Natural killer cell (primary cell): ENCODE measurements at regions of chr3 and their contacts with region 1.

Region 1: DNA sequence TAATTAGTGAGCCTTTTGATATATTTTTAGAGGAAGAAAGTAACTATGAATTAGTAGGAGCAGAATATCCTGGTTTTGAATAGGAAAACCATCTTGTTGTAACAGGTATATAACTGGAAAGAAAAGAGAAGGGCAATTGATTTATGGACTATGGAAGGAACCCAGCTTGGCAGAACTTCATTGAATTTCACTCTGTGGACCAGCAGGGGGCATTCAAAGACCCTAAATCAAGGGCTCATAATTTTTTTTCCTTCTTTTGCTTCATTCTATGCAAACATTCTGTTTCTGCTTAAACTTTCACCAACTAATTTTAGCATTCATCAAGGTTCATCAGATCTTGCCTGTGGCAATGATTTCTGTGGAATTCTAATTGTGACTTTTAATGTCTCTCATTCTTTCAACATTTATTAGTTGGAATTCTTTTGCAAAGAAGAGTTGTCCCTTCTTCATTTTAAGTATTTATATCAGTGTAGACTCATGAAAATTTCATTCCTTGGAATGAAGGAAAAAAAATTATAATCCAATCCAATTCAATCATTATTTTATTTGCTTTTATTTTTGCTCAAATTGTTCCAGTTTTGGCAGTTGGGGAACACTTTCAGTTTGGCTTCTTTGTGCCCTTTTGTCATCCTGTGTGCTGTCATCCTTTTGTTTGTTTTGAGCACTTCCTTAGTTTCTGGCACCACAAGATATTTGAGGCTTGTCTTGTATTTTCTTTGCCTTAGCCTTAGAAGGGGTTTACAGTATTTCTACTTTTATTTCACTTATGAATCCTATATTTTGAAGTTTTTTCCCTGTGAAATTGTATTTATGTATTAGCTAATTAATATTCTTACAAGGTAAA is 30.4 kb downstream of the NXPE3 start:
- DNase-seq: peak in 1 of 2 donors; percentile 81
- ATAC-seq: peak; percentile 62 to 80 (median 74)
- H3K4me3 ChIP-seq: no peak overlapping the region
- H3K4me3 Mint-ChIP-seq: no peak overlapping the region
- H3K27ac ChIP-seq: no peak overlapping the region
- H3K27ac Mint-ChIP-seq: peak overlapping the region; percentile 29 to 45
- H3K4me1 ChIP-seq: no peaks in the 10 kb centered on the region
- H3K4me1 Mint-ChIP-seq: peaks cover 8% of the 10 kb centered on the region in 2 donors
- H3K27me3 ChIP-seq: no peaks in the 10 kb centered on the region
- H3K27me3 Mint-ChIP-seq: no peaks in the 10 kb centered on the region
- CTCF ChIP-seq: peak; percentile 74

Region 2: DNA sequence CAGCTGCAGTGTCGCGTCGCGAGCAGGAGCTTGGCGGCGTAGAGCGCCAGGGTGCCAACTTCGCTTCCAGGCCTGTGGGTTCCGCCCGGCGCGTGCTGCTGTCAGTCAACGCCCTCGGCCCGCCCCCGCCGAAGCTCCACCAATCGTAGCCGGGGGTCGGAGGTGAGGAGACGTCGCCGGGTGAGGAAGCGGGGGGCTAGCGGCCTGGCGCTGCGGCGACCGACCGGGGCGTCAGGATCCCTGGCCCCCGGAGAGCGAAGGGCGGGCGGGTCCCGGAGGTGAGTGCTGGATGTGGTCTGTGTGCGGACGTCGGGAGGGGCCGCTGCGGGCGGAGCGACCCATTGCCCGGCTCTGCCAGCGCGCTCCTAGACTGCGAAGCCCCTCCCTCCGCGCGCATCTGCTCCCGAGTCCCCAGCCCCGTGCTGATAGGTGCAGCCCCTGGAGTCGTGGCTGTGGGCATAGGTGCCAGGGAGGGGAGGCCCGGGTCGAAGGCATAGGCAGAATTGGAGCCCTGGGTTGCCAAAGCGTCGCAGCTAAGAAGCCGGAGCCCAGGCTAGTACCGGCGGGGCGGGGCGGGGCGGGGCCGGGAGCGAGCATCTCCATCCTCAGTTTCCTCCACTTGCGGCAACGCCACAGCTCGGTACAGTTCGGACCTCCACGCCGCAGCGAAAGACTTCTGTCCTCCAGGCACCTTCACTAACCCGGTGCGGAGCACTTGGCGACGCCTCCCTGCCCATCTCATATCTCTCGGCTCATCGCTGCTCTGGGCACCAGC is 30.2 kb before region 1 on chr3 and contains the start of gene NXPE3:
- intact Hi-C with region 1: no loop called
- DNase-seq: peak; percentile 94 to 95
- ATAC-seq: peak; percentile 93 to 97 (median 94)
- H3K4me3 ChIP-seq: peak within 1 kb of the TSS; percentile 82
- H3K4me3 Mint-ChIP-seq: peak within 1 kb of the TSS; percentile 95
- H3K27ac ChIP-seq: peak within 1 kb of the TSS; percentile 95
- H3K27ac Mint-ChIP-seq: peak within 1 kb of the TSS; percentile 91 to 97
- H3K4me1 ChIP-seq: peaks cover 16% of the 10 kb centered on the region
- H3K4me1 Mint-ChIP-seq: peaks cover 24 to 34% of the 10 kb centered on the region in 2 donors
- H3K27me3 ChIP-seq: no peaks in the 10 kb centered on the region
- H3K27me3 Mint-ChIP-seq: no peaks in the 10 kb centered on the region
- CTCF ChIP-seq: no peak
- total RNA-seq, gene NXPE3: 17.0 to 27.1 (median 21.1) TPM

Region 3: GRCh38 chr3:101791778-101792177 is 17.6 kb before region 1 on chr3:
- intact Hi-C with region 1: no loop called
- DNase-seq: no peak
- ATAC-seq: no peak
- H3K4me3 ChIP-seq: no peak overlapping the region
- H3K4me3 Mint-ChIP-seq: no peak overlapping the region
- H3K27ac ChIP-seq: no peak overlapping the region
- H3K27ac Mint-ChIP-seq: no peak overlapping the region
- H3K4me1 ChIP-seq: no peaks in the 10 kb centered on the region
- H3K4me1 Mint-ChIP-seq: peaks cover 34 to 35% of the 10 kb centered on the region in 2 donors
- H3K27me3 ChIP-seq: no peaks in the 10 kb centered on the region
- H3K27me3 Mint-ChIP-seq: no peaks in the 10 kb centered on the region
- CTCF ChIP-seq: no peak

Region 4: GRCh38 chr3:101827211-101828174 is 18.1 kb after region 1 on chr3:
- intact Hi-C with region 1: loop called (anchors 2 kb)
- DNase-seq: peak; percentile 75 to 90
- ATAC-seq: peak; percentile 80 to 92 (median 86)
- H3K4me3 ChIP-seq: peak overlapping the region; percentile 56
- H3K4me3 Mint-ChIP-seq: peak overlapping the region; percentile 92
- H3K27ac ChIP-seq: peak overlapping the region; percentile 89
- H3K27ac Mint-ChIP-seq: peak overlapping the region; percentile 89 to 96
- H3K4me1 ChIP-seq: peaks cover 26% of the 10 kb centered on the region
- H3K4me1 Mint-ChIP-seq: peaks cover 35 to 38% of the 10 kb centered on the region in 2 donors
- H3K27me3 ChIP-seq: no peaks in the 10 kb centered on the region
- H3K27me3 Mint-ChIP-seq: no peaks in the 10 kb centered on the region
- CTCF ChIP-seq: no peak